Breast epithelium (tissue), 4 donors: ENCODE measurements at regions of chr7 and their contacts with region 1.

Region 1: DNA sequence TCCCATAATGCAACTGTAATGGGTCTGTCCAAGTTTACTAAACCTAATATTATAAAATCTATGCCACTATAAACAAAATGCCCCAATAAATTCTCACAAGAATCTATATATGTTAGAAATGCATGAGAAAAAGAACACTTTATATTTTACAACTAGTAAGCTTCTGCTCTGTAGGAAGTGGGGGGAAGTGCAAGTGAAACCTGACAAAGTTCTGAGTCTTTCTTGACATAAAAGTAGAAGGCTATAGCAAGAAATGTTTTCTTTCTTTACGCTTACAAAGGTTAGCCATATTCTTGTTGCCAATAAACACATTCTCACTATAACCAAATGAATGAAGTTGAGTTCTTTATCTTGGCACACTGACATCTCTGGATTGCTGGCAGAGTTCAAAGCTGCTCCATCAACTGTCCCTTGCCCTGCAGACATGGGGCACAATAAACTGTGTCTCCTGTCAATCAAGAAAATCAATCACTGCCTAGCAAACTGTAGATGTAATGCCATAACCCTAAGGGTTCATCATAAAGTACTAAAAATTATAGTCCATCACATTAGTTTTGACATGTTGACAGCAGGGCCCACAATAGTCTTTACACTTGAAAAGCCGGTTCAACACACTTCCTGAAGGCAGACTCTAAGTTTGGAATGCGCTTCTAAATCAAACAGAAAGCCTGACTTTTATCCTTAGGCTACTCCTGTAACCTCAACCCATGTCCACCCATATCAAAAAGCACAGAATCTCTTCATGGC is 58.7 kb downstream of the TPK1 start:
- DNase-seq: no peak
- H3K4me3 ChIP-seq: no peak overlapping the region
- H3K27ac ChIP-seq: no peak overlapping the region
- H3K4me1 ChIP-seq: no peaks in the 10 kb centered on the region
- H3K27me3 ChIP-seq: no peaks in the 10 kb centered on the region
- CTCF ChIP-seq: no peak
- POLR2A ChIP-seq: no peak

Region 2: DNA sequence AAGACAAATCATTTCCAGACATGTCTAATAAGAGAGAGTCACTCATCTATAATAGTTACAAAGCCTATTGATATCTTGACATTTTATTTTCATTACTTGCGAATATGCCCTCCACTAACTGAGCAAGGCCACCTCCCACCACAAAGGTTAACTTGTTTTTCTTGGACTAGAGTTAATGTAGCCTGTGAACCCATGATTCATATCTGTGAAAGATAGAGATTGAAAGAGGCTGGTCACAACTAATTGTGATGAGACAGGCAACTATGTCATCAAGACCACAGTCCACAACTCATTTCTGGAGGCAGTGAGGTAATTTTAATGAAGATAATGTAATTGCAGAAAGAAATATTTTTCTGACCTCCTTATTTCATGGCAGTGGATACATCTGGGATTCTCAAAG is 550.5 kb after region 1 on chr7:
- intact Hi-C with region 1: loop called (anchors 5 kb)
- DNase-seq: no peak
- H3K4me3 ChIP-seq: no peak overlapping the region
- H3K27ac ChIP-seq: no peak overlapping the region
- H3K4me1 ChIP-seq: no peaks in the 10 kb centered on the region
- H3K27me3 ChIP-seq: no peaks in the 10 kb centered on the region
- CTCF ChIP-seq: no peak
- POLR2A ChIP-seq: no peak